ENCODE measurements at regions of chr7 and their contacts with region 1.

Region 1: GRCh38 chr7:35801392-35802101 is 690 bp downstream of the SEPTIN7 start:
- DNase-seq: no peak
- H3K4me3 ChIP-seq: peak overlapping the region; percentile 82
- CTCF ChIP-seq: peak; percentile 52

Region 2: GRCh38 chr7:35694781-35695472 is 106.6 kb before region 1 on chr7 and contains the start of gene HERPUD2:
- CTCF ChIA-PET with region 1: interaction called, 3 read pairs
- POLR2A ChIA-PET with region 1: interaction called, 19 read pairs
- DNase-seq: no peak
- H3K4me3 ChIP-seq: peak within 1 kb of the TSS; percentile 92
- CTCF ChIP-seq: no peak

Region 3: DNA sequence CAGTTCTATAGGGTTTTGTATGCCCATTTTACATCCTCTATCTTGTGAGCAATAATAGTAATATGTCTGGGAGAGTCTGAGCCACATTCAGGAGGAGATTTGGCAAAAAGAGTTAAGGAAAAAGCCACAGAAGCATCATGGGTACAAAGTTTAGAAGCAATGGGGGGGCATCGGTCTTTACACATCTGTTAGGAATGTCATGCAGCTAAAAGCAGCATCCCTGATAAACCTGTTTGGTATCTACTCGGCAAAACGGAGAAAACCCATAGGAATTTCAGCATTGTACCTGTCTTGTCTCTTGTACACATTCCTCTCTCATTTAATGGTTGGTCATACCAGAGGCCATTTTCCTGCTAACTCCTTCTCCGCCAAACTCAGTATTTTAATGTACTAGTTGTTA is 94.1 kb before region 1 on chr7:
- CTCF ChIA-PET with region 1: interaction called, 38 read pairs
- POLR2A ChIA-PET with region 1: interaction called, 10 read pairs
- DNase-seq: no peak
- H3K4me3 ChIP-seq: no peak overlapping the region
- CTCF ChIP-seq: no peak

Region 4: GRCh38 chr7:35714862-35715261 is 86.7 kb before region 1 on chr7:
- CTCF ChIA-PET with region 1: interaction called, 38 read pairs
- POLR2A ChIA-PET with region 1: interaction called, 7 read pairs
- DNase-seq: no peak
- H3K4me3 ChIP-seq: no peak overlapping the region
- CTCF ChIP-seq: no peak

Region 5: GRCh38 chr7:35761871-35762677 is 39.5 kb before region 1 on chr7:
- CTCF ChIA-PET with region 1: no interaction called
- POLR2A ChIA-PET with region 1: interaction called, 11 read pairs
- DNase-seq: peak; percentile 44
- H3K4me3 ChIP-seq: no peak overlapping the region
- CTCF ChIP-seq: no peak

Region 6: DNA sequence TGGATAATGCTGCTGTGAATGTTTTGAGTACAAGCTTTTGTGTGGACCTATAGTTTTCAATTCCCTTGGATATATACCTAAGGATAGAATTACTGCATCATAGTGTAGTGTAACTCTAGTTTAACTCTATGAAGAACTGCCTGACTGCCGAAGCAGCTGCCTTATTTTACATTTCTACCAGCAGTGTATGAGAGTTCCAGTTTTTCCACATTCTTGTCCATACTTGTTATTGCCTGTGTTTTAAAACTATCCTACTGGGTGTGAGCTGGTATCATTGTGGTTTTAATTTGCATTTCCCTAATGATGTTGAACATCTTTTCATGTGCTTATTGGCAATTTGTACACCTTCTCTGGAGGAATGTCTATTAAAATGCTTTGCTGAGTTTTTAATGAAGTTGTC is 15.0 kb after region 1 on chr7:
- CTCF ChIA-PET with region 1: interaction called, 13 read pairs
- POLR2A ChIA-PET with region 1: interaction called, 6 read pairs
- DNase-seq: no peak
- H3K4me3 ChIP-seq: no peak overlapping the region
- CTCF ChIP-seq: no peak

Region 7: GRCh38 chr7:35906191-35906908 is 104.8 kb after region 1 on chr7:
- CTCF ChIA-PET with region 1: interaction called, 14 read pairs
- POLR2A ChIA-PET with region 1: interaction called, 5 read pairs
- DNase-seq: peak; percentile 36
- H3K4me3 ChIP-seq: no peak overlapping the region
- CTCF ChIP-seq: peak; percentile 79